Calu3 (cell line): ENCODE measurements at regions of chr7 and their contacts with region 1.

Region 1: DNA sequence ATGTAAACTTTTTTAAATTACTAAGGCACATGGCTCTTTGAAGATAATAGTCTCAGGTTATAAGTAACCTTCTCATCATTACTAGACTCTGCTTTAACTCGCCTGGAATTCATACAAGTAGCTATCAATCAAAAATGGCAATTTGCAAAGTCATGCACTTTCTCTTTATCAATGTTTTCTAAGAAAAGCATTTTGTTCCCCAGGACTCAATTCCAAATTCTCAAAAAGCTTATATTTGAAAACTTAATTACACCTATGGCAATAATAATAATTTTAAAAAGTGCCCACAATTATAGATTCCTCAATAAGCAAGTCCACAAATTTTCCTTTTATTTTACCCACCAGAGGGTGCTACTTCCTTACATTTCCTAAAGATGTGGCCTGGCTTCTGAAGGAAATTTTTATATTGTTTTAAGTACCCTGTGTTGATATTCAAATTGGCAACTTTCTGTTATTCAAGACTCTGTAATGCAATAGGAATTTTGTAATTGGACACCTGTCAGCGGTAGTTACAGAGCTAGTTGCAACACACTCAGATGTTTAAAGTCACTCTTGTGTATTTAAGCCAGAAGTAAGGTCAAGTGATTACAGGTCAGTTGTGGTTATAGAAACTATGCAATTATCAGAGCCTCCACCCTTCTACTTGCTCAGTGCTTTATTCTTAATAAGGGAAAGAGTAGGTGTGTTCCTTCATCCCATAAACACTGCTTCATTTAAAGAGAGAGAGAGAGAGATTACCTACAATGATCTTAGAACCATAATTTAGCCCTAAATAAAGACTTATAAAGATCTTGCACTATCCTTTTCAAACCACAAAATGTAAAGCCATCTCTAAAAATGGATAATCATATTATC is 47.1 kb upstream of the HYAL4 start:
- DNase-seq: peak; percentile 50
- H3K4me3 Mint-ChIP-seq: peak overlapping the region; percentile 42
- H3K27ac Mint-ChIP-seq: peak overlapping the region; percentile 12
- H3K4me1 Mint-ChIP-seq: peaks cover 9% of the 10 kb centered on the region
- H3K27me3 Mint-ChIP-seq: peaks cover 5% of the 10 kb centered on the region
- CTCF ChIP-seq: peak; percentile 48

Region 2: GRCh38 chr7:123635551-123636359 is 162.1 kb before region 1 on chr7:
- CTCF ChIA-PET with region 1: no interaction called
- intact Hi-C with region 1: loop called (anchors 5 kb)
- DNase-seq: no peak
- H3K4me3 Mint-ChIP-seq: no peak overlapping the region
- H3K27ac Mint-ChIP-seq: no peak overlapping the region
- H3K4me1 Mint-ChIP-seq: peaks cover 8% of the 10 kb centered on the region
- H3K27me3 Mint-ChIP-seq: no peaks in the 10 kb centered on the region
- CTCF ChIP-seq: peak; percentile 35

Region 3: DNA sequence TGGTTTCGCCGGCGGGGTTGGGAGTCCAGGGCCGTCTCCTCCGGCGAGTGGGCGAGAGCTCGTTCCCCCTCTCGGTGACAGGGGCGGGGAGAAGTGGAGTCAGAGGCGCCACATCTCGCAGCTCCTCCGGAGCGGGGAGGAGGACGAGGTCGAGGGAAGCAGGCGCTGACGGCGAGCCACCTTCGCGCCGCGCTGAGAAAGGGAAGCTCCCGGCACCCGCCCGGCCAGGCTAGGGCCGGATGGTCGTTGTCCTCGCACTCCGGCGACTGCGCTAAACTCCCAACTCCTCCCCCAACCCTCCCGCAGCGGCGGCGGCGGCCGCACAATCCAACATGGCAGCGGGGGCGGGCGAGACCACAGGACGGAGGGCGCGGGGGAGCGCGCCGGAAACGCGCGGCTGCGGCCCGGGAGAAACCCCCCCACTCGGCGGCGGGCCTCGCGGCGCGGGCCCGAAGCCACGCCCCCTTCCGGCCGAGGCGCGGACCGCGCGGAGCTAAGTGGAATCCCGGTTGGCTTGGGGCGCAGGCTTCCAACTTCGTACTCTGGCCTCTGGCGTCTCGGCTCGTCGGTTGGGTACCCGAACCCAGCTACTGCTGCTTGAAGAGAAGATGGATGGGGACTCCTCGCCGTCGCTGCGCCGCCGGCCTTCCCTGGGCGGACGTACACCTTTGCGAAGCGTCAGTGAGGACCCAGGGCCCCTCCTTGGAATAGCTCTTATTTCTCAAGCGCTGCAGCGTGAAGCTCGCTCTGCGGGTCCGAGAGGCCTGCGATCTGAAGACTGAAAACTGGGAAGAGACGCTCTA is 49.0 kb before region 1 on chr7 and contains the start of gene WASL:
- CTCF ChIA-PET with region 1: no interaction called
- intact Hi-C with region 1: loop called (anchors 1 kb)
- DNase-seq: peak; percentile 95
- H3K4me3 Mint-ChIP-seq: peak within 1 kb of the TSS; percentile 91
- H3K27ac Mint-ChIP-seq: peak within 1 kb of the TSS; percentile 75
- H3K4me1 Mint-ChIP-seq: peaks cover 45% of the 10 kb centered on the region
- H3K27me3 Mint-ChIP-seq: no peaks in the 10 kb centered on the region
- CTCF ChIP-seq: no peak
- total RNA-seq, gene WASL: 33.2 and 37.5 TPM in 2 replicates

Region 4: GRCh38 chr7:123865517-123866117 is 67.7 kb after region 1 on chr7:
- CTCF ChIA-PET with region 1: interaction called, 28 read pairs
- intact Hi-C with region 1: loop called (anchors 1 kb)
- DNase-seq: peak; percentile 69
- H3K4me3 Mint-ChIP-seq: no peak overlapping the region
- H3K27ac Mint-ChIP-seq: no peak overlapping the region
- H3K4me1 Mint-ChIP-seq: peaks cover 29% of the 10 kb centered on the region
- H3K27me3 Mint-ChIP-seq: peaks cover 15% of the 10 kb centered on the region
- CTCF ChIP-seq: peak; percentile 59

Region 5: GRCh38 chr7:123916240-123916724 is 118.4 kb after region 1 on chr7:
- CTCF ChIA-PET with region 1: interaction called, 3 read pairs
- intact Hi-C with region 1: loop called (anchors 2 kb)
- DNase-seq: peak; percentile 14
- H3K4me3 Mint-ChIP-seq: peak overlapping the region; percentile 43
- H3K27ac Mint-ChIP-seq: peak overlapping the region; percentile 20
- H3K4me1 Mint-ChIP-seq: peaks cover 16% of the 10 kb centered on the region
- H3K27me3 Mint-ChIP-seq: no peaks in the 10 kb centered on the region
- CTCF ChIP-seq: peak; percentile 37

Region 6: GRCh38 chr7:124085179-124085578 is 287.3 kb after region 1 on chr7:
- CTCF ChIA-PET with region 1: interaction called, 3 read pairs
- intact Hi-C with region 1: loop called (anchors 10 kb)
- DNase-seq: peak; percentile 76
- H3K4me3 Mint-ChIP-seq: no peak overlapping the region
- H3K27ac Mint-ChIP-seq: peak overlapping the region; percentile 16
- H3K4me1 Mint-ChIP-seq: peaks cover 40% of the 10 kb centered on the region
- H3K27me3 Mint-ChIP-seq: peaks cover 41% of the 10 kb centered on the region
- CTCF ChIP-seq: no peak